HCT116 (cell line): ENCODE measurements at regions of chr5 and their contacts with region 1.

Region 1: GRCh38 chr5:154072414-154073171 is 33.8 kb downstream of the MFAP3 start:
- DNase-seq: peak; percentile 56
- ATAC-seq: peak; percentile 97
- H3K4me3 ChIP-seq: peak overlapping the region; percentile 9 to 22; a peak in 2 of 4 replicates
- H3K27ac ChIP-seq: no peak overlapping the region
- H3K4me1 ChIP-seq: peaks cover 0 to 8% of the 10 kb centered on the region in 2 experiments; a peak in 2 of 4 replicates
- H3K27me3 ChIP-seq: no peaks in the 10 kb centered on the region
- CTCF ChIP-seq: peak; percentile 87 to 97 (median 95)
- POLR2A ChIP-seq: no peak
- RAD21 ChIP-seq: peak; percentile 97

Region 2: GRCh38 chr5:154058055-154059038 is 14.2 kb before region 1 on chr5:
- CTCF ChIA-PET with region 1: interaction called, 14 read pairs
- POLR2A ChIA-PET with region 1: no interaction called
- RAD21 ChIA-PET with region 1: interaction called in 1 of 2 experiments, 5 read pairs
- intact Hi-C with region 1: no loop called
- DNase-seq: peak; percentile 52
- ATAC-seq: peak; percentile 86
- H3K4me3 ChIP-seq: no peak overlapping the region
- H3K27ac ChIP-seq: no peak overlapping the region; the same call in 1 of the 2 replicates
- H3K4me1 ChIP-seq: peaks cover 14 to 20% of the 10 kb centered on the region in 2 experiments
- H3K27me3 ChIP-seq: no peaks in the 10 kb centered on the region; the same call in 1 of the 2 replicates
- CTCF ChIP-seq: no peak
- POLR2A ChIP-seq: no peak
- RAD21 ChIP-seq: no peak

Region 3: DNA sequence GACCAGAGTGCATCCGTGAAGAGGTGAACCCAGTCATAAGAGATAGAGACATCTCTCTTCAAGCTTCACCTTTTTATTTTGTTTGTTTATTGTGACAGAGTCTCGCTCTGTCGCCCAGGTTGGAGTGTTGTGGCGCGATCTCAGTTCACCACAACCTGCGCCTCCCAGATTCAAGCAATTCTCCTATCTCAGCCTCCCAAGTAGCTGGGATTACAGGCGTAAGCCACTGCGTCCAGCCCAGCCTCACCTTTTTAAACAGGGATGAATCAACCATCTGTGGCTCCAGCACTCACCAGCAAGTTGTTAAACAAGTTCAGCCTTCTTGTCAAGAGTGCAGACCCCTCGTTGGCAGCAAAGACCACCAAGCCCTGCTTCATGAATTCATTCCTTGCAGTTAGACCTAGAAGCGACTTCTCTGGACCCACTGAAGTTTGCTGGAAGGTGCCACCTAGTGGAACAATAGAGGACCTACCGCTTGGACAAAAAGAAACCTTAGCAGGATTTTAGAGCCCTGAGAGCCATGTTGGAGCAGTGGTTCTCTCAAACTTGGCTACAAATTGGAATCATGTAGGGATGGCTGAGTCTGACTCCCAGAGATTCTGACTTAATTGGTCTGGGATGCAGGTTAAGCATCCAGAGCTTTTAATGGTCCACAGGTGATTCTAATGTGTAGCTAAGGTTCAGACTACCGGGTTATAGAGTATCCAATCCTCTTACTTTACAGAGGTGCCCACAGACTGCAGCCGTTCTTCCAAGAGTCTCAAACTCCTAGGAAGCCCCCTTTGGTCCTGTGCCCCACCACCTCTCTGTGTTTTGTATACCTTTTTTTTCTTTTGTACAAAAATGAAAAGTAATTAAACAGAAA is 107.5 kb after region 1 on chr5:
- CTCF ChIA-PET with region 1: interaction called, 15 read pairs
- POLR2A ChIA-PET with region 1: no interaction called
- RAD21 ChIA-PET with region 1: interaction called, 5 to 6 read pairs
- intact Hi-C with region 1: loop called (anchors 1 kb)
- DNase-seq: peak; percentile 40
- ATAC-seq: peak; percentile 97
- H3K4me3 ChIP-seq: no peak overlapping the region
- H3K27ac ChIP-seq: no peak overlapping the region
- H3K4me1 ChIP-seq: no peaks in the 10 kb centered on the region
- H3K27me3 ChIP-seq: peaks cover 29% of the 10 kb centered on the region; the same call in 1 of the 2 replicates
- CTCF ChIP-seq: peak; percentile 76 to 80 (median 78)
- POLR2A ChIP-seq: no peak
- RAD21 ChIP-seq: peak; percentile 73

Region 4: DNA sequence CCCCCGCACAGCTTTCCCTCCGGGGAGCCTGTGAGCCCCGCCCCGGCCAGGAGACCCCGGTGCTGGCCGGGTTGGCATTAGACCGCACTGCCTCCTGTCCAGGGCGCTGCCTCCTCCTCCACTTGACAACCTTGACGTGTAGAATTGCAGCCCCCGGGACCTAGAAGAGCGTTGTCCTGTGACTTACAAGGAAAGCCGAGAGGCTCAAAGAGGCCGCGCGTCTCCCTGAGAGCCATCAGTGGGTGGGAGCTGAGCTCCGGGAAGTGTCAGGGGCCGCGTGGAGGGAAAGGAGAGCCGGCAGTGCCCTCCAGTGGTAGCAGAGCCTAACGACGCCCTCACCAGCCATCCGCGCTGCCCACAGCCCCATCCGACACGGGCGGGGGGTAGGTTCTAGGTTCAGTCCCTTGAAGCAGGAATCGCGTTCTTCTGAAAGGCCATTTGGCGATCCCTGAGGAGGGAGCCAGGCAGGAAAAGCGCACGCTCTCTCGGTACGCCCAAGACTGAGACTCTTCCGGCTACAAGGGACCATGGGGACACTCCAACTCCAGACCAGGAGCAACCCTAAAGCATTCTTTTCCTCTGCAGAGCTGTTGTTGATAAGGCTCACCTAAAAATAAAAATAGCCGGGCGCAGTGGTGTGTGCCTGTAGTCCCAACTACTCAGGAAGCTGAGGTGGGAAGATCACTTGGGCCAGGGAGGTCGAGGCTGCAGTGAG is 332.6 kb after region 1 on chr5:
- CTCF ChIA-PET with region 1: interaction called, 70 read pairs
- POLR2A ChIA-PET with region 1: interaction called, 4 read pairs
- RAD21 ChIA-PET with region 1: interaction called, 13 to 16 read pairs
- intact Hi-C with region 1: loop called (anchors 1 kb)
- DNase-seq: peak; percentile 40
- ATAC-seq: peak; percentile 96
- H3K4me3 ChIP-seq: no peak overlapping the region
- H3K27ac ChIP-seq: no peak overlapping the region
- H3K4me1 ChIP-seq: peaks cover 8 to 23% of the 10 kb centered on the region in 2 experiments; a peak in 3 of 4 replicates
- H3K27me3 ChIP-seq: no peaks in the 10 kb centered on the region
- CTCF ChIP-seq: peak; percentile 77 to 85 (median 84)
- POLR2A ChIP-seq: no peak
- RAD21 ChIP-seq: peak; percentile 98

Region 5: GRCh38 chr5:154610321-154611154 is 537.9 kb after region 1 on chr5:
- CTCF ChIA-PET with region 1: no interaction called
- POLR2A ChIA-PET with region 1: no interaction called
- RAD21 ChIA-PET with region 1: no interaction called
- intact Hi-C with region 1: loop called (anchors 1 kb)
- DNase-seq: peak; percentile 76
- ATAC-seq: peak; percentile 99
- H3K4me3 ChIP-seq: peak overlapping the region; percentile 37 to 55
- H3K27ac ChIP-seq: no peak overlapping the region
- H3K4me1 ChIP-seq: peaks cover 3 to 18% of the 10 kb centered on the region in 2 experiments; a peak in 3 of 4 replicates
- H3K27me3 ChIP-seq: no peaks in the 10 kb centered on the region
- CTCF ChIP-seq: peak; percentile 93 to 95 (median 94)
- POLR2A ChIP-seq: no peak
- RAD21 ChIP-seq: peak; percentile 99